Esophagus muscularis mucosa (tissue), 4 donors: ENCODE measurements at regions of chr6 and their contacts with region 1.

Region 1: DNA sequence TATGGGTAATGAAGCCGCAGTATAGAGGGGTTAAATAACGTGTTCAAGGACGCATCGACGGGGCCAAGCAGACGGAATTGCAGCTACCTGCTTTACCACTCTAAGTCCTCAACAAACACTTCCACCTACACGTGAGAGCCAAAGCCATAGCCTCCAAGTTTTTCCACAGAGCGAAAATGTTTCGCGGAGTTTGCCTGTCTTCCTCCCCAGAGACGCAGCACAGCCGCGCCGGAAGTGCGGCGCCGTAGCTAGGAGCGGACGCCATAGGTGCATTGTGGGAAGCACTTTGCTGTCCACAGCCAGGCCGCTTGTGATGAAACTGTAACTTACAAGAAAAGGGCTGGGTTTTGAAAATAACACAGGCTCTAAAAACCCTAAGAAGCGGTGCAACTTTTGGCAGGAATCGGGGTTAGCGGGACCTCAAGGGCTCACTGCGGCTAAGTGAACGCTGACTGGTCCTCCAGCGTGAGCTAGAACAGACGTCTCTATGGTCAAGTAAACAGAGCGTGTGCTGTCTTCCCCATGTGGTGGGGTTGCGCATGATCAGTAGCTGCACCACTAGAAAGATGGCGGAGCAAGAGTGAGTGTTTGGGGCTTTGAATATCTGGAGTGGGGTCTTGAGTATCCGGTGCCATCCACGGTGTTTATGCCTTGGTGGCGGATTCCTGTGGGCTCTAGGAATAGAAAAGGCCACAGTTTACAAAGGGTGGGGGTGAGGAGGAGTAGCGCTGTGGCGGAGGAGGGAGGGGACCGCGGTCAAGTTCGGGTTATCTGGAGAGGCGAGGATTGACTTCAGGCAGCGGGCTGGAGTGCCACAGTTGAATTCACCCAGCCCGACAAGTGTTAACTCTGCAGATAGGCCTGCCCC is at the start of gene RPL7L1:
- DNase-seq: peak; percentile 94
- H3K4me3 ChIP-seq: peak within 1 kb of the TSS; percentile 56 to 87 (median 70)
- H3K27ac ChIP-seq: peak within 1 kb of the TSS; percentile 88 to 93 (median 91)
- H3K4me1 ChIP-seq: peaks cover 32 to 44% (median 42%) of the 10 kb centered on the region in 4 donors
- H3K27me3 ChIP-seq: no peaks in the 10 kb centered on the region
- CTCF ChIP-seq: peak in 1 of 3 experiments; percentile 29
- EP300 ChIP-seq: no peak
- POLR2A ChIP-seq: no peak
- total RNA-seq, gene RPL7L1: 66.8 to 82.2 (median 76.9) TPM

Region 2: DNA sequence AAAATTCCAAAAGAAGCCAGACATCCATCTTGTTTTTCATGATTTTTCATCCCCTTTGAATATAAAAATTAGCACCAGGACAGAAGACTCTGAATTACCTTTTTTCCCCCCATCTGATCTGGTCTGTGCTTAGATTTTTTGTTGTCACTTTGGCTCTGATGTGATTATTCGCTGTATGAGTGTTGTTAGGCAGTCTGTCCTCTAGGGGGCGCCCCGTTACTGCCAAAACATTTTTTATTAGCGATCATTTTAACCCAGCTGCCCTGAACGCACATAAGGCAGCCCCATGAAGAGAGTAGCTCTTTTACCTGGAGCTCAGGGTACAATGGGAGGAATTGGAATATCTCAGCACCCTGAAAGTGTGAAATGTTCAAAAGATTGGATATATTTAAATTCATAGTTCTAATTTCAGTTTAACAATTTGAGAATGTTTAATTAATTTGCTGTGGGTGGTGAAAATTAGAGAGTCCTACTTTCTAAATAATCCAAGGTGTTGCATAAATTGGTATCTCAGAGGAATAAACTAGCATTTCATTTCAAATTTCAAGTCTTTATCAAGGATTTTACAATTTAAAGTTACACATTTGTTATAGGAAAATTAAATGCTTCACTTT is 218.0 kb before region 1 on chr6:
- intact Hi-C with region 1: loop called (anchors 5 kb)
- DNase-seq: peak; percentile 96
- H3K4me3 ChIP-seq: no peak overlapping the region
- H3K27ac ChIP-seq: peak overlapping the region in 1 of 4 donors; percentile 24
- H3K4me1 ChIP-seq: peaks cover 0 to 4% (median 1%) of the 10 kb centered on the region in 4 donors
- H3K27me3 ChIP-seq: no peaks in the 10 kb centered on the region
- CTCF ChIP-seq: peak; percentile 83 to 93 (median 87)
- EP300 ChIP-seq: no peak
- POLR2A ChIP-seq: no peak

Region 3: GRCh38 chr6:42726485-42727086 is 153.0 kb before region 1 on chr6:
- intact Hi-C with region 1: loop called (anchors 2 kb)
- DNase-seq: no peak
- H3K4me3 ChIP-seq: peak overlapping the region; percentile 56 to 63 (median 60)
- H3K27ac ChIP-seq: peak overlapping the region; percentile 77 to 89 (median 80)
- H3K4me1 ChIP-seq: peaks cover 10 to 30% (median 23%) of the 10 kb centered on the region in 4 donors
- H3K27me3 ChIP-seq: no peaks in the 10 kb centered on the region
- CTCF ChIP-seq: peak; percentile 89 to 98 (median 92)
- EP300 ChIP-seq: no peak
- POLR2A ChIP-seq: no peak

Region 4: DNA sequence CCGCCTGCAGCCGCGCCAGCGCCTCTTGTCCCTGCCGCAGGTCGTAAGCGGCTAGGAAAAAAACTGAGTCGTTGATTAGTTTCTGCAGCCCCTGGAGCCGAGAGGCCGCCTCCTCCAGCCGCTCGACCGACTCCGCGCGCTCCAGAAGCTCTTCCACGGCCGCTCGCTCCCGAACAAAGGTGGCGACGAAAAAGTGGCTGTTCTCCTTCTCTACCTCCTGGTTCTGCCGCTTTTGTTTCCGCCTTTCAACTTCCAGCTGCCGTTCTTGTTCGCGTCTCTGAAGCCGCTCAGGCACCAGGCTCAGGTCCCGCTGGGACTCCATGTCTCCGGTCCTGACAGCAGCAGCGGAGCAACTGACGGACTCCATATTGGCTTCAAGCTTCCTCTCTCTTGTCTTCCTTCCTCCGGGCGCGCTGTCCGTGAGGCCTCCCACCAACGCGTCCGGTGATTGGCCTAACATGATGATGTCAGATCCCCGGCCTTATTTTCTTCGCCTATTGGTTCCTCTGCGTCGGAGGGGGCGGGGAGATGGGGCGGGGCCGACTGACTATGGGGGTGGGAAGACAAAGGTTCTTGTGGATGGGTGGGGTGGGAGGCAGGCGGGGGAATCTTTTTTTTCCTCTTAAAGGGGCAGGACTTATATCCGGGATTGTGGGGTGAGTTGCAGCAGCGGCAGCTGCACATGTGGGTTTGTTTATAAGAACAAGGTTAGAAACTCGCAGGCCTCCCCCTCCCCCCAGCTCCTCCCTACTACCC is 133.7 kb before region 1 on chr6 and contains the start of gene TBCC:
- intact Hi-C with region 1: loop called (anchors 5 kb)
- DNase-seq: peak; percentile 100
- H3K4me3 ChIP-seq: peak within 1 kb of the TSS; percentile 91 to 98 (median 95)
- H3K27ac ChIP-seq: peak within 1 kb of the TSS; percentile 97 to 99 (median 98)
- H3K4me1 ChIP-seq: peaks cover 26 to 60% (median 42%) of the 10 kb centered on the region in 4 donors
- H3K27me3 ChIP-seq: no peaks in the 10 kb centered on the region
- CTCF ChIP-seq: no peak
- EP300 ChIP-seq: no peak
- POLR2A ChIP-seq: peak; percentile 80
- total RNA-seq, gene TBCC: 33.2 to 41.9 (median 38.5) TPM

Region 5: GRCh38 chr6:42819803-42820511 is 59.6 kb before region 1 on chr6:
- intact Hi-C with region 1: loop called (anchors 10 kb)
- DNase-seq: no peak
- H3K4me3 ChIP-seq: peak overlapping the region in 1 of 4 donors; percentile 37
- H3K27ac ChIP-seq: peak overlapping the region; percentile 76 to 83 (median 79)
- H3K4me1 ChIP-seq: peaks cover 25 to 32% (median 30%) of the 10 kb centered on the region in 4 donors
- H3K27me3 ChIP-seq: no peaks in the 10 kb centered on the region
- CTCF ChIP-seq: peak in 2 of 3 experiments; percentile 7 to 51
- EP300 ChIP-seq: no peak
- POLR2A ChIP-seq: no peak

Region 6: GRCh38 chr6:43328528-43328927 is 448.9 kb after region 1 on chr6:
- intact Hi-C with region 1: no loop called
- DNase-seq: no peak
- H3K4me3 ChIP-seq: no peak overlapping the region
- H3K27ac ChIP-seq: no peak overlapping the region
- H3K4me1 ChIP-seq: no peaks in the 10 kb centered on the region
- H3K27me3 ChIP-seq: no peaks in the 10 kb centered on the region
- CTCF ChIP-seq: no peak
- EP300 ChIP-seq: no peak
- POLR2A ChIP-seq: no peak